ENCODE measurements at regions of chr4 and their contacts with region 1.

Region 1: GRCh38 chr4:83455281-83456129 is at the starts of genes HELQ and MRPS18C:
- DNase-seq: peak; percentile 97
- ATAC-seq: peak; percentile 92
- H3K4me3 Mint-ChIP-seq: peak within 1 kb of the TSS; percentile 97
- H3K27ac Mint-ChIP-seq: peak within 1 kb of the TSS; percentile 99
- H3K4me1 Mint-ChIP-seq: peaks cover 37% of the 10 kb centered on the region
- H3K27me3 Mint-ChIP-seq: no peaks in the 10 kb centered on the region
- total RNA-seq, gene HELQ: 9.3 to 10.1 TPM
- total RNA-seq, gene MRPS18C: 78.0 to 89.5 TPM

Region 2: GRCh38 chr4:82428969-82429727 is 1026.4 kb before region 1 on chr4:
- CTCF ChIA-PET with region 1: interaction called, 3 read pairs
- POLR2A ChIA-PET with region 1: no interaction called
- intact Hi-C with region 1: loop called in 1 of 2 experiments (anchors 1 kb)
- DNase-seq: peak; percentile 96
- ATAC-seq: peak; percentile 55
- H3K4me3 Mint-ChIP-seq: peak overlapping the region; percentile 94
- H3K27ac Mint-ChIP-seq: peak overlapping the region; percentile 99
- H3K4me1 Mint-ChIP-seq: peaks cover 50% of the 10 kb centered on the region
- H3K27me3 Mint-ChIP-seq: no peaks in the 10 kb centered on the region

Region 3: DNA sequence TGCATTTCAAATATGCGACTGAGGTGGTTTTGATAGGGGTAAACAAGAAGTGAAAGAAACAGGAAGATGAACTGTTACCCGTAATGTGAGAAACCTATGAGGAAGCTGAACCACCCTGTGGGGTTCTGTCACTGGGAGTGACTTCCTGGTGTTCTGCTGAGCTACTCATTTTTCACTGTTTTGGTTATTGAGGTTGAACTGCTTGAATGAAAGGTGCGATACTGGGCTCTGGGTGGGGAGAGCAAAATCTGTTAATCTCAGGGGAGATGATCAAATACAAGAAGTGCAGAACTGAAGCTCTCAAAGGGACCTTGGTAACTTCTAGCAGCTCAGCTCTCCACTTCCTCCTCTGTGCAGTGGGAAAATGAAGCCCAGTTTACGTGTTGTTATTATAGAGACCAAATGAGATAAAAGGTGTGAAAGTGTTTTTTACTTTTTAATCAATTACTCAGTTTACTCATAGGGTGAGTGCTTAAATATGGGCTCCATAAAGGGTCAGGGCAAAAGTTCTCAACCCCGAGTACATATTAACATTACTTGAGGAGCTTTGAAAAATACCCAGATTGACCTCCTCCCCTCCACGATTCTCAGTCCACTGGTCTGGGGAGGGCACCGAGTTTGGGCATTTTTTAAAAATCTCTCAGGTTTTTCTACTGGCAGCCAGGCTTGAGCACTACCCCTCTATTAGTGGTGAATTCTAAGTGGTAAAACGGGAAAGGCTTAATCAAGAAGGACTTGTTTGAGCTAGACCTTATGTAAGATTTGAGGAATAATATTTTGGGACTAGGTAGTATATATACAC is 237.6 kb before region 1 on chr4:
- CTCF ChIA-PET with region 1: no interaction called
- POLR2A ChIA-PET with region 1: no interaction called
- intact Hi-C with region 1: loop called in 1 of 2 experiments (anchors 1 kb)
- DNase-seq: peak; percentile 73
- ATAC-seq: peak; percentile 85
- H3K4me3 Mint-ChIP-seq: peak overlapping the region; percentile 20
- H3K27ac Mint-ChIP-seq: peak overlapping the region; percentile 76
- H3K4me1 Mint-ChIP-seq: peaks cover 79% of the 10 kb centered on the region
- H3K27me3 Mint-ChIP-seq: peaks cover 2% of the 10 kb centered on the region

Region 4: DNA sequence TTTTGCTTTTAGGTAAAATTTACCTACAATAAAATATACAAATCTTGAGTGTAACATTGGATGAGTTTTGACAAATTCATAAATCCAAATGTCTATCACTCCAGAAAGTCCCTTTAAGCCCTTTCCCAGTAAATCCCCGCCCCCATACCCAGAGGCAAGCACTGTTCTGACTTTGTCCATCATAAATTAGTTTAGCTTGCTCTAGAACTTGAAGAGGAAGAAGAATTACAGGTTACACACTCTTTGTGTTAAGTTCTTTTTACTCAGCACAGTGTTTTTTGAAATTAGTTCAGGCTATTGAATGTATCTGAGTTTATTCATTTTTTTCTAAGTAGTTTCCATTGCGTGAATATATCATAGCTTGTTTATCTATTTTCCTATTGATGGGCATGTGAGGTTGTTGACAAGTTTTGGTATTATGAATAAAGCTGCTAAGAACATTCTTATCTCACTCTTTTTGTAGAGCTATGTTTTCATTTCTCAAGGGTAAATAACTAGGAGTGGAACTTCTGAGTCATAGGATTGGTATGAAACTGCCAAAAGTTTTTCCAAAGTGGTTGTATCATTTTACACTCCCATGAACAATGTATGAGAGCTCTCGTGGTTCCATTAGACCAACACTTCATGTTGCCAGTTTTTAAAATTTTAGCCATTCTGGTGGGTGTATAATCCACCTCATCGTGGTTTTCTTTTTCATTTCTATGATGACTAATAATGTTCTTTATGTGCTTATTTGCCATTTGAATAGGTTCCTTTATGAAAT is 98.4 kb before region 1 on chr4:
- CTCF ChIA-PET with region 1: no interaction called
- POLR2A ChIA-PET with region 1: no interaction called
- intact Hi-C with region 1: loop called (anchors 1 kb)
- DNase-seq: peak; percentile 52
- ATAC-seq: peak; percentile 91
- H3K4me3 Mint-ChIP-seq: no peak overlapping the region
- H3K27ac Mint-ChIP-seq: peak overlapping the region; percentile 72
- H3K4me1 Mint-ChIP-seq: peaks cover 23% of the 10 kb centered on the region
- H3K27me3 Mint-ChIP-seq: no peaks in the 10 kb centered on the region

Region 5: DNA sequence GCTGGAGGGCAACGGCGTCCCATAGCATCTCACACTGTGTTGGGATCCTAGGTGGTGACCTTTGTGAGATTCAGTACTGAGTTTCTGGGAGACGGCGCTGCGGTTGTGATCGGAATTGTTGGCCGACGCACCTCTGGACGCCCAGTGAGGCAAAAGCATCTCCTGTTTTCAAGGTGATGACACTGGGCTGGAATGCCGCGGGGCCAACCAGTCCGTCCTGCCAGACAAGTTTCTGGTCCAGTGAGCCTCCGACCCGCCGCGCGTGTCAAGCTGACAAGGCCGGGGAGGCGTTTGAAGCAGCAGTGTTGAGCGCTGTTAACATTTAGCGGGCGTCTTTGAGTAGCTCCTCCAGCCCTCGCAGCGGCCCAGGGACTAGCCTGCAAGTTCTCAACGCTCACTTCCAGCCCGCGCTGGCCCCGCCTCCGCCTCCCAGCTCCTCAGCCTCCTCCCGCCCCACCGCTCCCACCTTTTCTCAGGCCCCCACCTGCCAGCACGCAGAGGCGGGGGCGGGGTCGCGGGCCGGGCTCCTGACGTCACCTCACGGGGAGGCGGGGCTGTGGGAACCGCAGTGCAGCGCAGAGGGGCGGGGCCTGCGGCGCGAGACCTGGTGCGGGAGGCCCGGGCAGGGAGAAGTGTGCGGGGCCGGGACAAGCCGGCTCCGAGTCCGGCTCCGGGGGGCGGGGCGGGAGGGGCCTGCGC is 1126.9 kb after region 1 on chr4:
- CTCF ChIA-PET with region 1: no interaction called
- POLR2A ChIA-PET with region 1: no interaction called
- intact Hi-C with region 1: loop called in 1 of 2 experiments (anchors 2 kb)
- DNase-seq: peak; percentile 93
- ATAC-seq: peak; percentile 79
- H3K4me3 Mint-ChIP-seq: peak overlapping the region; percentile 68
- H3K27ac Mint-ChIP-seq: no peak overlapping the region
- H3K4me1 Mint-ChIP-seq: peaks cover 15% of the 10 kb centered on the region
- H3K27me3 Mint-ChIP-seq: peaks cover 46% of the 10 kb centered on the region

Measured in activated CD4-positive, alpha-beta T cell treated with anti-CD3 and anti-CD28 coated beads for 36 hours (primary cell).